Calu3 (cell line): ENCODE measurements at regions of chr17 and their contacts with region 1.

Region 1: DNA sequence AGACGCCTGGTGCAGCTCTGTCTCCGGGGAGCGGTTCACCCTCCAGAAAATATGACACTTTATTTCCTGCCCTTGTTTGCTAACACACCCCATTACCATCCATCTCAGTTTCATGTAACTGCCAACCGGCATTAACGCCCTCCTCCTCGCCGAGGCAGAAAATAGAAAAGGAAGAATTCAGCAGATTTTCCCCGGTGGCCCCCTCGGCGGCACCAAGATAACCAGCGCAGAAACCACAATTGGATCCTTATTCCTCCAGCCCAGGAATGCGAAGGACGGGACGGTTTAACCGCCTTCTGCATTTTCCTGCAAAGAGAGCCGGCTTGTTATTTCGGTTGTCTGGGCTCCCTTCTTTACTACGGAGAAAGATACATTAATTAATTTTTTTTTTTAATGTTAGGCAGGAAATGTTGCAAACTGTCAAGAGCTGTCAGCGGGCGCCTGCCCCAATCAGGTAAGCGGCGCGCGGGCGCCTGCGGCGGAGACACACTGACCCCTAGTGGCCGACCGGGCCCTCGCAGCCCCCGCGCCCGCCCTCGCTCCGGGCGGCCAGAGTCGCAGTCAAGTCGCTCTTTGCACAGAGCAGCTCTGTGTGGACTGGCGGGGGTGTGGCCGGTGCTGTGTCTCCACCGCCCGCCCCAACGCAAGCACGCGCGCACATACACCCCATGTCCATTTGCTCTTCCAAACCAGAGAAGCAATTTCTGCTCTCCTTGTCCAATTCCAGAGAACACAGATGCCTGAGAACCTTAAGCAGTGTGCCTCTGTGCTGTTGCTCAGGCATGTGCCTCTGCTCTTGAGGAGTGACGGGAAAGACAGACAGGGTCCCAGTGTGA is 53.6 kb downstream of the C17orf67 start:
- DNase-seq: peak; percentile 85
- H3K4me3 Mint-ChIP-seq: peak overlapping the region; percentile 59
- H3K27ac Mint-ChIP-seq: peak overlapping the region; percentile 42
- H3K4me1 Mint-ChIP-seq: peaks cover 24% of the 10 kb centered on the region
- H3K27me3 Mint-ChIP-seq: peaks cover 33% of the 10 kb centered on the region
- CTCF ChIP-seq: peak; percentile 77

Region 2: DNA sequence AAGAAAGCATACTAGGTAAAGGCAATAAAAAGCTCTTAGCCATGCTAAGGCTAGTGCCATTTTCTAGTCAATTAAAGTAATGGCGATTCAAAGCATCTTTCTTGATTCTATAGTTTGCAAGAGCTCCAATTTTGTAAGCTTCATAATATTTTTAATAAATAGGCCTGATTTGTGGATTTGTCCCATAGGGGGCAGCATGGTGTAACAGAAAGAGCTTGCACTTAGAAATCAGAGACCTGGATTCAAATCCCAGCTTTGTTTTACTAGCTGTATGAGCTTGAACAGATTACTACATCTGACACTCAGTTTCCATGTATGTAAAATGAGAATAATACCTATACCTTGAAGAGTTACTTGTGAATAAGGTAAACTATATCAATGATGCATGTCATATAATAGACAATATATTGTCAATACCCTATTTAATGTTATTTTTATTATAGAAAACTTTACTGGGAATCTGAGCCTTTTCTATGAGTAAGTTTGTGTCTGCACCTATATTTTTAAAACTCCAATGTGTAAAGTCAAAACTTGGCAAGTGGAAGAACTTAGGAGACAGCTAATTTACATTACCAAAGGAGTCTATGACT is 280.2 kb before region 1 on chr17:
- CTCF ChIA-PET with region 1: interaction called, 7 read pairs
- intact Hi-C with region 1: loop called (anchors 10 kb)
- DNase-seq: peak; percentile 22
- H3K4me3 Mint-ChIP-seq: no peak overlapping the region
- H3K27ac Mint-ChIP-seq: no peak overlapping the region
- H3K4me1 Mint-ChIP-seq: no peaks in the 10 kb centered on the region
- H3K27me3 Mint-ChIP-seq: peaks cover 34% of the 10 kb centered on the region
- CTCF ChIP-seq: no peak

Region 3: DNA sequence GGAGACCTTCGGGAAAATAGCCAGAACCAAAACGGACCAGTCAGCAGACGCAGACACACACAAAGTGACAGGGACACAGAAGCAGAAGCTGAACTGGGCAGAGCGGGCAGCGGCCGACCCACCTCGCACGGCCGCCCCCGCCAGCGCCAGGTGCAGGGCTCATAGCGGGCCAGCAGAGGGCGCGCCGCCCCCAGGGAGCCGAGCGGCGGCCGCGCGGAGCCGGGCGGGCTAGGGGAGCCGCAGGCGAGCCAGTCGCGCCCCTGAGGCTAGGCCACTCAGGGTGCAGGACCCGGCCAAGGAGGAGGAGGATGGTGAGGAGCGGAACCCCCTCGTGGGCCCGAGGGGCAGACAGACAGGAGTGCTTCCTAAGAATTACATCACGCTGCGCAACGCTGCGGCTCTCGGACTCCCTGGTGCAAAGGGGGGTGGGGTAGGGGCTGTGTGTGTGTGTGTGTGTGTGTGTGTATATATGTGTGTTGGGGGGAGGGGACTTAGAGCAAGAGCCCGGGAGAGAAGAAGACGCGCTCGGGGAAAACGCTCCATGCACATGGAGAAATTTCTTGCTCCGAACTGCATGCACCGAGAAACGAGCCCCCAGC is 187.5 kb before region 1 on chr17:
- CTCF ChIA-PET with region 1: interaction called, 13 read pairs
- intact Hi-C with region 1: loop called (anchors 5 kb)
- DNase-seq: peak; percentile 75
- H3K4me3 Mint-ChIP-seq: peak overlapping the region; percentile 74
- H3K27ac Mint-ChIP-seq: no peak overlapping the region
- H3K4me1 Mint-ChIP-seq: peaks cover 7% of the 10 kb centered on the region
- H3K27me3 Mint-ChIP-seq: peaks cover 62% of the 10 kb centered on the region
- CTCF ChIP-seq: peak; percentile 89

Region 4: GRCh38 chr17:56727876-56728620 is 52.1 kb before region 1 on chr17:
- CTCF ChIA-PET with region 1: no interaction called
- intact Hi-C with region 1: no loop called
- DNase-seq: no peak
- H3K4me3 Mint-ChIP-seq: no peak overlapping the region
- H3K27ac Mint-ChIP-seq: no peak overlapping the region
- H3K4me1 Mint-ChIP-seq: no peaks in the 10 kb centered on the region
- H3K27me3 Mint-ChIP-seq: peaks cover 84% of the 10 kb centered on the region
- CTCF ChIP-seq: no peak